Cardiac septum (tissue), 1 donor: ENCODE measurements at regions of chr17 and their contacts with region 1.

Region 1: GRCh38 chr17:16380640-16381495 is at the start of gene UBB:
- DNase-seq: peak; percentile 97
- total RNA-seq, gene UBB: 1,552 TPM

Region 2: DNA sequence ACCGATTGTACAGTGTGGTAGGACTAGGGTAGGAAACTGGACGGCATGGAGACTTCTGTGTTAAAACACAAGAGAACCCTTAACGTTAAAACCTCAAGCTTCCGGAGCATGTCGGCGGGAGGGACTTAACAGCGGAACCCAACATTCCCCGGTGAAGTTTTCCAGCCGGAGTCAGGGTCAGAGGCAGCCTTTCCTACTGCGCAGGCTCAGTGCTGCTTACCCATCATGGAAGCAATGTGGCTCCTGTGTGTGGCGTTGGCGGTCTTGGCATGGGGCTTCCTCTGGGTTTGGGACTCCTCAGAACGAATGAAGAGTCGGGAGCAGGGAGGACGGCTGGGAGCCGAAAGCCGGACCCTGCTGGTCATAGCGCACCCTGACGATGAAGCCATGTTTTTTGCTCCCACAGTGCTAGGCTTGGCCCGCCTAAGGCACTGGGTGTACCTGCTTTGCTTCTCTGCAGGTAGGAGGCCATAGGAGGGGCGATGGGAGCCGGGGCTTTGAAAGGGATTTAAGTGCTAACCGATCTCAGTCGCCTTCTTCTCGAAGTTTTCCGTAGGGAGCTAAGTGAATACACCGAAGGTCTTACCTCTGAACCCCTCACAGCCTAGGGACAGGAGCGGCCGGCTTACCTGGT is 163.7 kb before region 1 on chr17 and contains the start of gene PIGL:
- intact Hi-C with region 1: no loop called
- DNase-seq: peak; percentile 94
- total RNA-seq, gene PIGL: 9.9 TPM

Region 3: GRCh38 chr17:16417896-16418684 is 37.2 kb after region 1 on chr17:
- intact Hi-C with region 1: loop called (anchors 2 kb)
- DNase-seq: no peak

Region 4: DNA sequence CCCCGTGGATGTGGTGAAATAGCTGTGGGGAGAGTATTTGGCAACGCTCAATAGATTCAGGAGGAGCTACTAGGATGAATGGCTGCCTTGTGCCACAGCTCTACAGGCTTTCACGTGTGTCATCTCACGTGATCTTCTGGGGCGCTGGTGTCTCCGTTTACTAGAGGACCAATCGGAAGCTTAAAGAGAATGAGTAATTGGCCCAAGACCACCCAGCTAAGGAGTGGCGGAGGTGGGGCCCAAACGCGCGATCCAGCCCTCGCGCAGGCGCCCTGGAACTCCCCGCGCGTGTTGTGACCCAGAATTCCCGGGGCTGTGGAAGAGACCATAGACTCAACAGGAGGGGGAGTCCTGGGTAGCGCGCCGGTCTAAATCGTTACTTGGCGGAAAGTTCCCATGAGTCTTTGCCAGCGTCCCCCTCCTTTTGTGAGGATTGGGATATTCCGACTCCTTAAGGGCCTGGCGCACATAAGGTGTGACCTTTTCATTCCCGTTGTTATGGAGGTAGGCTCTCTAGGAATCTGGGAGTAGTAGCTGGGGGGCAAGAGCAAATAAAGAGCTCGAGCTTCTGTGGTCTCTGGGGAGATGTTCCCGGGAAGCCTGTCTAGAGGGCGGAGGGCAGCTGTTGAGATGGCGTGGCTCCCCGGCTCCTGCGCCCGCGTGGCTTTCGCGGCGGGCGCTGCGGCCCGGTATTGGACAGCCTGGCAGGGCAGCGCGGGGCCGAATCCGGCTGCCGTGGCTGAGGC is 57.9 kb after region 1 on chr17:
- intact Hi-C with region 1: loop called (anchors 2 kb)
- DNase-seq: peak; percentile 97